HCT116 (cell line): ENCODE measurements at regions of chr12 and their contacts with region 1.

Region 1: GRCh38 chr12:26402648-26403047 is 207.3 kb downstream of the SSPN start:
- DNase-seq: peak; percentile 58
- ATAC-seq: peak; percentile 98
- H3K4me3 ChIP-seq: no peak overlapping the region
- H3K27ac ChIP-seq: no peak overlapping the region
- H3K4me1 ChIP-seq: peaks cover 8 to 12% of the 10 kb centered on the region in 2 experiments
- H3K27me3 ChIP-seq: no peaks in the 10 kb centered on the region
- CTCF ChIP-seq: peak; percentile 30 to 52 (median 41); a peak in 3 of 6 replicates
- POLR2A ChIP-seq: no peak
- RAD21 ChIP-seq: peak; percentile 66

Region 2: DNA sequence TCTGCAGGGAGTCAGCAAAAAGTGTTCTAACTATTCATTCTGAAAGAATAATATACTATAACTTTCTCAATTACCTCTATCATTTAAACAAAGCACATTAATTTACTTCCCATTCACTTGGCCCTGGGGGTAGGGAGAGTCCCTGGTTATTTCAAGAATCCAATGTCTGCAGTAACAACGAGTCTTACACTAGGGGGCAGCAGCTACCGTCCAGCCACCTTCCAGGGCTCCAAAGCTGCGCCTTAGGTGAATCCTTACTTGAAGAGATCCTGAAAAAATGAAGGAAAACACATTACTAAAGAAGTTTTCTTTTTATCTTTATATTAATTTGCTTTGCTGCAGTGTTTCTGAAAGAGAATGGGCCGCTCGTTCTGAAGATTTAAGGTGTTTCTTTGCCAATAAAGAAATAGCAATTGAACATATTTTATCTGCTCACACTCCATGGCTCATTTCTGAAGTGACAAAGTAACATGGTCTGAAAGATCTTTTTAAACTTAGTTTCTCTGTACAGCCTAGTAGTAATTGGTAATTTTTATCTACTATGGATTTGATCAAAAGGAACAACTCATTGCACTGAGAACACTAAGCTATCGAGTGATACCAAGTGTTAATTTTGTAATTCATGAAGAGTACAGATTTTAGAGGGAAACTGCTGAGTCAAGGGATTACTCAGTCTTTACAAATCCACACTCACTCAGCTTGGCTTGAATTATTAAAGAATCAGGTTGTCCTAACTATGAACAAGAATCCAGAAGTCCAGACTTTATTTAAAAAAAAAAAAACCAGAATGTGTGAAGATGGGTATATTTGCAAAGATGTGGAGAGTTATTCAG is 305.4 kb before region 1 on chr12:
- CTCF ChIA-PET with region 1: no interaction called
- POLR2A ChIA-PET with region 1: no interaction called
- RAD21 ChIA-PET with region 1: no interaction called
- intact Hi-C with region 1: loop called (anchors 2 kb)
- DNase-seq: peak; percentile 53
- ATAC-seq: peak; percentile 99
- H3K4me3 ChIP-seq: no peak overlapping the region
- H3K27ac ChIP-seq: no peak overlapping the region
- H3K4me1 ChIP-seq: peaks cover 9 to 12% of the 10 kb centered on the region in 2 experiments; a peak in 3 of 4 replicates
- H3K27me3 ChIP-seq: no peaks in the 10 kb centered on the region
- CTCF ChIP-seq: peak; percentile 79 to 94 (median 87)
- POLR2A ChIP-seq: no peak
- RAD21 ChIP-seq: peak; percentile 92

Region 3: DNA sequence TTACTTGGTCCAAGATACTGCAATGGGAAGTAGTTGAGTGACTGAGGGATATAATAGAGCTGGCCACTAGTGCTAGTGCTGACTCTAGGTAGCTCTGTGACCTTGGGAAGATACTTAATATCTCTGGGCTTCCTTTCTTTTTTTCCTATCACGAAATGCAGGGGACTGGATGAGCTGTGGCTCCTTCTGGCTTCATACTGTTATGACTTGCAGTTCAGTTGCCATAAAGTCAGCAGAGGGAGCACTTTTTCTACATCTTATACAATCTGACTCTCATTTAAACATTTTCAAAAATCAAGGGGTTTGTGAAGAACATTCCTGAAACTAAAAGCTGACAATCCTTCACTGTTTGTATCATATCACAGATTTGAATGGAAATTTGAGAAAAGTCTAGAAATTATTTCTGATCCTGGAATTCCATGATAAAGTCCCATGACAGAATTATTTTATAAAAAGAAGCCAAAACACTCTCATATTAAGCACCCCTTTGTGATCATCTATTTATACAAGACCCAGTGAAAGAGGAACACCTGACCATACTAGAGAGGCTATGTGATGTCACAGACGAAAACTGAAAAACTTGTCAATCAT is 283.2 kb before region 1 on chr12:
- CTCF ChIA-PET with region 1: interaction called, 4 read pairs
- POLR2A ChIA-PET with region 1: no interaction called
- RAD21 ChIA-PET with region 1: no interaction called
- intact Hi-C with region 1: loop called (anchors 5 kb)
- DNase-seq: peak; percentile 51
- ATAC-seq: peak; percentile 58
- H3K4me3 ChIP-seq: no peak overlapping the region
- H3K27ac ChIP-seq: no peak overlapping the region
- H3K4me1 ChIP-seq: peaks cover 13 to 38% of the 10 kb centered on the region in 2 experiments
- H3K27me3 ChIP-seq: peaks cover 5% of the 10 kb centered on the region; the same call in 1 of the 2 replicates
- CTCF ChIP-seq: peak; percentile 53 to 75 (median 62)
- POLR2A ChIP-seq: no peak
- RAD21 ChIP-seq: peak; percentile 77

Region 4: GRCh38 chr12:26416550-26416949 is 13.9 kb after region 1 on chr12:
- CTCF ChIA-PET with region 1: no interaction called
- POLR2A ChIA-PET with region 1: no interaction called
- RAD21 ChIA-PET with region 1: no interaction called
- intact Hi-C with region 1: no loop called
- DNase-seq: no peak
- ATAC-seq: no peak
- H3K4me3 ChIP-seq: no peak overlapping the region
- H3K27ac ChIP-seq: no peak overlapping the region
- H3K4me1 ChIP-seq: no peaks in the 10 kb centered on the region
- H3K27me3 ChIP-seq: no peaks in the 10 kb centered on the region
- CTCF ChIP-seq: no peak
- POLR2A ChIP-seq: no peak
- RAD21 ChIP-seq: no peak